ENCODE measurements at regions of chr2 and their contacts with region 1.

Region 1: DNA sequence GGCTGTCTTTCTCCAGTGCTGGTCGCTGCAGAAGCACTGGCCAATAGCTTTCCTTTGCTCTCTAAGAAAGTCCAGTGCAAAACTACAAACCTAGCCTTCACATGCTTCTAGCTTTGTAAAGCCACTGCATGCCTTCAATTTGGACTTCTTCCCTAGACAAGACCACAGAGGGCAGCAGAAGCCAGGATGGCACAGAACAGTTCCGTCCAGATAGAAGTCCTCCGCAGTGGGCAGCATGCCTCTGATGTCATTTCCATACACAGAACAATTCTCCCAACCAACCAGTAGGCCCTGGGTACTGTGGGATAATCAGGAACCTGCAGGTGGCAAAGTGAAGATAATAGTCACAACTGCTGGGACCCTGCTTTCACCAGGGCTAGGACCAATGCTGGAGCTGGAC is 3.3 kb downstream of the ST6GAL2 start:
- DNase-seq: no peak
- H3K4me3 ChIP-seq: no peak overlapping the region
- H3K27ac ChIP-seq: no peak overlapping the region
- H3K4me1 ChIP-seq: peaks cover 10% of the 10 kb centered on the region
- H3K27me3 ChIP-seq: no peaks in the 10 kb centered on the region
- CTCF ChIP-seq: no peak
- POLR2A ChIP-seq: no peak

Region 2: DNA sequence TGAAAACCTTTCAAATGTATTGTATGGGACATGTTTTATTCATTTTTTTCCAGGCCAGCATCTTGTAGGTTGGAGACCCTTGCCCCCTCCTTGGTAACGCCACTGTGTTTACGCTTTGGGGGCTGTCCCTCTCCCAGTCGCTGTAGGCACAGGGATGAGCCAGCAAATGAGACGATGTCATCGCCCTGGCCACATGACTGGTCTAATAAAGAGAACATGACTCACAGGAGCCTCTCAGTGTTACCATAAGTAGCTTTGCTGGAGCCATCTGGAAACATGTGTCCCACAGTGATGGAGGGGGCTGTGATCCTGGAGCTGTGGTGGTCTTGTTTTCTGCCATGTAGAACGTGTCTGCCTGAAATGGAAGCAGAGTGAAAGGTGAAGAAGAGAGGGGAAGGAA is 316.6 kb before region 1 on chr2:
- intact Hi-C with region 1: loop called (anchors 5 kb)
- DNase-seq: no peak
- H3K4me3 ChIP-seq: no peak overlapping the region
- H3K27ac ChIP-seq: peak overlapping the region; percentile 27
- H3K4me1 ChIP-seq: peaks cover 34% of the 10 kb centered on the region
- H3K27me3 ChIP-seq: no peaks in the 10 kb centered on the region
- CTCF ChIP-seq: no peak
- POLR2A ChIP-seq: no peak